Activated T-helper 2 cell treated with anti-CD3 and anti-CD28 coated beads, Interferon-gamma antibody, Interleukin-2, Interleukin-4, amounts not matched to agents 10 μg/mL and 5 μg/mL and 100 μg/mL, durations not matched to agents 14 hours and 24 hours and 36 hours (primary cell): ENCODE measurements at regions of chr6 and their contacts with region 1.

Region 1: DNA sequence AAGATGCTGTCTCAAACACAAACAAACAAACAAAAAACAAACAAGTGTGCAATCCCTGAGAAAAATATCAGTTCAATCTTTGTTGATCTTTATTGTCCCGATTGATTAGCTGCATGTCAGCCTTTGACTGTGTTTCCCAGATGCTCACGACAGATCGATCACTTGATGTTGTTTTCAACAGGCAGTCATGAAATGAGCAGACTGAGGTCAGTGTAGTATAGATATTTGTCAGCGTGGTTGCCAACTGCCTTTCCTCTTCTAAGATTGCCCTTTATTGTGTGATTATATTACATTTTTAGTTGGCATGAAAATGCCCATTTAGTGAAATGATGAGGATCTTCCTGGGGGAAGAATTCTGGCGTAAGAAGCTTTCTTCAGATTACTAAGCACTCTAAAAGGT is 25.6 kb downstream of the UTRN start:
- DNase-seq: peak; percentile 26
- H3K4me3 Mint-ChIP-seq: peak overlapping the region; percentile 11
- H3K27ac Mint-ChIP-seq: peak overlapping the region; percentile 46
- H3K4me1 Mint-ChIP-seq: peaks cover 44% of the 10 kb centered on the region
- H3K27me3 Mint-ChIP-seq: no peaks in the 10 kb centered on the region

Region 2: DNA sequence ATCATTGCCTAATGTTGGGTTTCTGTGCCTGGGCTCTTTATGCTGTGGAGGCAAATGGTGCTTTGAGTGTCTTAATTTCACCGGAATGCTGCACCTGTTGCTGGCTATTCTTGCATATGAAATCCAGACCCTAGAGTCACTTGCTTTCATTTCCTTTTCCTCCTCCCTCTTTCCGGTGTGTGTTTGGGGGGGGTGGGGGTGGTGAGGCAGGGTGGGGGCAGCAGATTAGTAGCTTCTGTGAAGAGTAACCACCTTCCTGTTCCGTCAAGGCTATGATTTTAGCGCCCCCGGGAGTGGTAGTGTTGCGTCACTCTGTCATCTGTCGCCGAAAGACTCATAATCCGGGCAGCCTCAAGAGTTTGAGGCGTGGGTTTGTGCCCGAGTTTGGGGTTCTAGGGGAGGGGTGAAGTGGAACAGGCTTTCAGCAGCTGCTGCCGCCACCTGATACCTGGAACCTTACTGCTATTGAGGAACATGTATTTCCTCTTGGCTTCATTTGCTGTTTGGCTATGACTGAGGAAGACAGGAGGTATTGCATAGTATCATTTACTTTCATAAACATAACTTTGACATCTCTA is 23.5 kb after region 1 on chr6:
- intact Hi-C with region 1: loop called (anchors 2 kb)
- DNase-seq: peak; percentile 54
- H3K4me3 Mint-ChIP-seq: peak overlapping the region; percentile 75
- H3K27ac Mint-ChIP-seq: peak overlapping the region; percentile 71
- H3K4me1 Mint-ChIP-seq: peaks cover 46% of the 10 kb centered on the region
- H3K27me3 Mint-ChIP-seq: no peaks in the 10 kb centered on the region

Region 3: GRCh38 chr6:144343701-144344428 is 33.1 kb after region 1 on chr6:
- intact Hi-C with region 1: loop called (anchors 1 kb)
- DNase-seq: peak; percentile 44
- H3K4me3 Mint-ChIP-seq: peak overlapping the region; percentile 93
- H3K27ac Mint-ChIP-seq: peak overlapping the region; percentile 99
- H3K4me1 Mint-ChIP-seq: peaks cover 67% of the 10 kb centered on the region
- H3K27me3 Mint-ChIP-seq: no peaks in the 10 kb centered on the region

Region 4: DNA sequence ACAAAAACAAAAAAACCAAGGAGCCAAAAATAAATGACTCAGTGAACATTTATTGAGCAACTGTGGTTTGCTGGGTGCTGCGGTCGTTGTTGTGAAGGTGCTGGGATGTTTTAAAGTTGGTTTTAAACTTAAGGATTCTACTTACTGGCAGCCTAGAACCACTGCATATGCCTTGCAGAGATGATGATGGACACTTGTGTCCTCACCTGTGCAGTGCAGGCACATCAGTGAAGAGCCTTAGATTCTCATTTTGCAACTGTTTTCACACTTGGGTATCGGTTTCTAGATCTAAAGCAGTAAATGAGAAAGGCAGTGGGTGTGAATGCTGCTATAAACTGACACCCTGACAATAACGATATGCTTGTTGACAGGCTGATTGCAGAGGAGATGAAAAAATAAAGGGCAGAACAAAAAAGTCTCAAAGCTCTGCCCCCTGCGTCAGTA is 43.1 kb after region 1 on chr6:
- intact Hi-C with region 1: no loop called
- DNase-seq: no peak
- H3K4me3 Mint-ChIP-seq: peak overlapping the region; percentile 52
- H3K27ac Mint-ChIP-seq: peak overlapping the region; percentile 75
- H3K4me1 Mint-ChIP-seq: peaks cover 58% of the 10 kb centered on the region
- H3K27me3 Mint-ChIP-seq: no peaks in the 10 kb centered on the region